Activated naive CD4-positive, alpha-beta T cell treated with anti-CD3 and anti-CD28 coated beads, Interleukin-2, amount 10 ng/mL, durations not matched to agents 7 days and 5 days (primary cell): ENCODE measurements at regions of chr11 and their contacts with region 1.

Region 1: DNA sequence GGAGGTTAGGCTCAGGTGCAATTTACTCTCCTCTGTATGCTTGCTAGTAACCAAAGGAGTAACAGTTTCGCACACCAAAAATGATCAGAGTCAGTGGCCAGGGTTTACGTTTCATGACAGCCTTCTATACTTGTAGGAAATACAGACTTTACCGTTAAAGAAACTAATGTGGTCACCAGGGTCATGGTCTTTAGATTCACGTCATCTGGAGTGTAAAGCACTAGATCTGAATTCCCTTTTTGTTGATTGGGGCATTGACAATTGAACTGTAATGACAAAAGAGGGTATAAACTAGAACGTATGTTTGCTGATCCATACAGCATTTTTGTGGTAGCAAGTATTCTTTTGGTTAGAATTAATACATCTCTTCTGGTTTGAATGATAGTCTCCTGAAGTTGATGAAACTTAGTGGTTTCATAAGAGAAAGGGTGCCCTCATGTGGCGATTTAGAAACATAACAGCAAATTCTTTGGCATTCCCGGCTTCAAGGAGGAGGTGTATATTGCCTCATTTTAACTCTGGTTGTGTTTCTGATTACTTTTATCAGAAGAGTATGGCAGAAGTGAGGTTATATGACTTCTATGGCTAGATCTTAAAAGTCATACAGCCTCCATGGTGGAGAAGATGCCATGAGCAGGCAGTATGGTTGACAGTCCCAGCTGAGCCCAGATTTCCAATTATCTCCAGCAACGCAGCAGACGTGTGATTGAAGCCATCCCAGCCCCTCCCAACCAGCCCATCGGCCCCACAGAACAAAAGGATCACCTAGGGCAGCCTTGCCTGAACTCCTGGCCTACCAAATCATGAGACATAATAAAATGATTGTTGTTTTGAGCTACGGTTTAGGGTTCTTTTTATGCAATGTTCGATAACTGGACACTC is 35.1 kb downstream of the MMP7 start:
- DNase-seq: peak; percentile 44
- H3K4me3 Mint-ChIP-seq: no peak overlapping the region
- H3K27ac Mint-ChIP-seq: no peak overlapping the region
- H3K4me1 Mint-ChIP-seq: peaks cover 19% of the 10 kb centered on the region
- H3K27me3 Mint-ChIP-seq: peaks cover 26% of the 10 kb centered on the region

Region 2: GRCh38 chr11:102367364-102367763 is 128.0 kb before region 1 on chr11:
- CTCF ChIA-PET with region 1: interaction called, 36 read pairs
- DNase-seq: no peak
- H3K4me3 Mint-ChIP-seq: no peak overlapping the region
- H3K27ac Mint-ChIP-seq: peak overlapping the region; percentile 12
- H3K4me1 Mint-ChIP-seq: peaks cover 36% of the 10 kb centered on the region
- H3K27me3 Mint-ChIP-seq: no peaks in the 10 kb centered on the region

Region 3: GRCh38 chr11:102416976-102417375 is 78.4 kb before region 1 on chr11:
- CTCF ChIA-PET with region 1: no interaction called
- DNase-seq: no peak
- H3K4me3 Mint-ChIP-seq: peak overlapping the region; percentile 25
- H3K27ac Mint-ChIP-seq: peak overlapping the region; percentile 88
- H3K4me1 Mint-ChIP-seq: peaks cover 92% of the 10 kb centered on the region
- H3K27me3 Mint-ChIP-seq: no peaks in the 10 kb centered on the region

Region 4: DNA sequence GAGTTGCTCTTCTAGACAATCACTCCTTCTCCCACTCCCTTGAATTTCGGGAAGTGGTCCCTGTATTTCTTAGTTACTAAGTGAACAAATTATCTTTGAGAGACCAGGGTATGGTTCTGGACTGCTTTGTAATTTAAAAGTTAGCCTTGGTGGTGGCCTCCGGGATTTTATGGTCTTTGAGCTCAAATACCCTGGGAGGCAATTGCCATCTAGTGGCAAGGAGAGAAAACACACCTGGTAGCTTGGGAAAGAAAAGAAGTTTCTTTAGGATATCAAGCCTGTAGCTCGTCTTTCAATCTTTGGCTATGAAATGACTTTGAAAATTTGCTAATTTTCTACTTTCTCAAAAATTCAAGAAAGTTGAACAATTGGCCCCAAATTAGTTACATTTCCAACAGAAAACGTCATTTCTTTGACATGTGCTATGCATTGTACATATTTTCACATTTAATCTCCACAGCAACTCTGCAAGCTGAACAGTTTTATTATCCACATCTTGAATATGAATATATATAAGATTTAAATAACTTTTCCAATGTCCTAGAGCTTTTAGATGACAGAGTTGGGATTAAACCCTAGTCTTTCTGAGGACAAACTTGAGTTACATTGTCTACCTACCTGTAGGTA is 171.0 kb after region 1 on chr11:
- CTCF ChIA-PET with region 1: interaction called, 15 read pairs
- DNase-seq: peak; percentile 33
- H3K4me3 Mint-ChIP-seq: no peak overlapping the region
- H3K27ac Mint-ChIP-seq: no peak overlapping the region
- H3K4me1 Mint-ChIP-seq: no peaks in the 10 kb centered on the region
- H3K27me3 Mint-ChIP-seq: peaks cover 4% of the 10 kb centered on the region